Left ventricle myocardium superior (tissue), 1 donor: ENCODE measurements at regions of chr1 and their contacts with region 1.

Region 1: DNA sequence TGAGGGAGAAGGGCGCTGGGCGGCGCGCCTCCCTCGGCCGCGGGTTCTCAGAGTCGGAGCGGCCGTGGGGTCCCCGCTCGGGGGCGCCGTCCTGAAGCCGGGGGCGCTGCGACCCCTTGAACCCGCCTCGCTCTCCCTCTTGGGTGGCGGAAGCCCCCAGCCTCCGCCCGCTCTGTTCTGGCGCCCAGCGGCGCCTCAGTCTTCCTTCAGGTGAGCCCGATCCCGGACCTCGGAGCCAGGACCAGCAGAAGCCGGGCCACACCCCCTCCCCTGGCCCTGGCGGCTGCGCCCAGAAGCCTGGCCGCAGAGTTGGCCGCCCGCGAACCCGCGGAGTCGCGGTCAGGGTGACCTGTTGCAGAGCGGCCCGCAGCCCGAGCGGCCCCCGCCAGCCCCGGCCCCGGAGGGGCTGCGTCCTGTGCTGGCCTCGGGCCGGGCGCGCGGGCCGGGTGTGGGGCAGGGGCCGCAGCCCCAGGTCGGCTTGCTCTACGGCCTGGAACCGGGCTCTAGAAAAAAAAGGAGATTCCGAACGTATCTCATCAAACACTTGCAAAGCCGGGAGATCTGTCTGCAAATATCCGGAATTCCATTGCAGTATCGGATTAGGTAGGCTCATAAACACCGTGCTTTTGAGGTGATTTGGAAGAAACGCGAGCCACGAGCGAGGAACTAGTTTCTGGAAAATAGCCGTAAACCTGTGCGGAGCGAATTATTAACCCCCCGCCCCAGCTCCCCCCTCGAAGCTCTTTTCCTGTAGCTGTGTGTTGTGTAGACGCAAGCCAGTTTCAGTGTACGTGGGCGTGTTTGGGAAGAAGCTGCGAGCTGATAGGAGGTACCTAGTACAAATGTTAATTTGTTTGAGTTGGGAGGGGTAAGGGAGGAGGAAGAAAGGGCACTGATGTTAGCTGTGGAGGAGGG is 816 bp downstream of the RALGPS2 start:
- DNase-seq: peak; percentile 66
- ATAC-seq: peak; percentile 83

Region 2: DNA sequence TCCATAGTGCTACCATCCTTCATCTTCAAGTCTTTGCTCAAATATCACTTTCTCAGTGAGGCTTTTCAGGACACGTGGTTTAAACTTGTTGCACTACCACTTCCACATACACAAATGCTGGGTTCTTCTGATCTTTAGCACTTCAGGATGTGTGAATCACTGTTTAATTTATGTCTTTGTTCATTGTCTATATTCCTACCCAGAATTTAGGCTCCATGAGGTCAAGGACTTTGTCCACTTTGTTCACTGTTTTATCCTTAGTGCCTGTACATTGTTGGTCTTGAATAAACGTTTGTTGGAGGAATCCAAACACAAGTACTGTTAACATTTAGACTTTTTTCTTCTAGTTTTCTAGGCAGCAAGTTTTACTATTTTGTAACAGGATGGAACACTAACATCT is 43.4 kb before region 1 on chr1:
- intact Hi-C with region 1: loop called (anchors 2 kb)
- DNase-seq: no peak
- ATAC-seq: no peak

Region 3: DNA sequence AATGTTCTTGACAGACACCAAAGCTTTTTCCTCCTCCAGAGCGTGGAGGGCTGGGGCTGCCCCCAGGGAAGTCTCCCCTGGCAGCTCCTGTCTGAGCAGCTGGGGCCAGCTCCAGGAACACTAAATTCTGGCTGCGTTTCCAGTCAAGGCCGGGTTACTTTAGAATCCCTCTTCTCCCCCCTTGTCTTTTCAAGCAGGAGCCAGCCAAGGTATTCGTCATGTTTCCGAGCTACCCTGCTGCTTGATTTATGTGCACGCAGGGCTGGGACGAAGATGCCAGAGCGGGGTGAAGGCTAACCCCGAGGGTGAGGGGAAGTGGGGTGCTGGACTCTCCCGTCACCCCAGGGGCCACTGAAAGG is 213.1 kb after region 1 on chr1:
- intact Hi-C with region 1: no loop called
- DNase-seq: peak; percentile 86
- ATAC-seq: peak; percentile 91